Caco-2 (cell line): ENCODE measurements at regions of chr2 and their contacts with region 1.

Region 1: GRCh38 chr2:207473049-207473930 is 56.5 kb upstream of the CREB1 start:
- DNase-seq: no peak
- H3K4me3 ChIP-seq: no peak overlapping the region
- H3K4me3 Mint-ChIP-seq: no peak overlapping the region
- H3K27ac Mint-ChIP-seq: no peak overlapping the region
- H3K4me1 ChIP-seq: peaks cover 25% of the 10 kb centered on the region
- H3K4me1 Mint-ChIP-seq: peaks cover 17% of the 10 kb centered on the region
- H3K27me3 ChIP-seq: no peaks in the 10 kb centered on the region
- H3K27me3 Mint-ChIP-seq: no peaks in the 10 kb centered on the region
- CTCF ChIP-seq: peak; percentile 9 to 30

Region 2: DNA sequence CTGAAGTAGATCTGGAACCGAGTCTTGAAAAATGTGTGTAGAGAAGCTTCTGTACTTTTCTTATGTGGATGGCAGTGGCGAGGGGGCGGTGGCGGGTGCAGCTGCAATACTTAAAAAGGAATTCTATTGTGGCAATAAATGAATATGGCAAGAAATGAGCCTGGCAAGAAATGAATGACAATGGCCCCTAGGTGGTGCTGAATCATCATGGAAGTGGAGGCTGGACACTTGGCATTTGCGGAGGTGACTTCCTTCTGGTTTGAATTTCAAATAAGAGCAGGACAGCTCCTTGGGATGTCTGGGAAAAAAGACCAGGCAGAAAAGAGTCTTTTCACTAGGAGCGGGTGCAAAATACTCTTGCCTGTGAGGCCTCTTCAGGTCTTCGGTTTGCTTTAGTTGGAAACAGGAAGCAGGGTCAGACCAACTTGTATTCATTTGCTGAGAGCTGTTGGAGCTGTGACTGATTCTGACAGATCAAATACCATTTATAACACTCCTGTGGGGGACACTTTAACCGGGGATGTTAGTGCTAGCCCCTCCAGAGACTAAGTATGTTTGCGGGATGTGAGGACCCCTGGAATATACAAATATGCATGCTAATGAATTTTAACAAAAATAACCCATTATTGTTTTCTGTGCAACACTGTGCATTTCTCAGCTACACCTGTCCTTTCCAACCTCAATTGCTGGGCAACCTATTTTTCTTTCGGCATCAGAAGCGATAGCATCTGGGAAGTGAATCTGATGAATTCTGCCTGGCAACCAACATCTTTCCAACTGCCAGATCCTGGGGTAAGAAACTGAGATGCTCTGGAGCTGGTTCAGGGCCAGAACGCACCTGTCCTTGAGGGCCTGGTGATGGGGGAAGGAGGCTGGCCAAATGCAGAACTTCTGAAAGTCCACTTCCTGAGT is 672.5 kb before region 1 on chr2:
- CTCF ChIA-PET with region 1: no interaction called
- POLR2A ChIA-PET with region 1: no interaction called
- intact Hi-C with region 1: loop called (anchors 1 kb)
- DNase-seq: peak; percentile 50 to 71
- H3K4me3 ChIP-seq: no peak overlapping the region
- H3K4me3 Mint-ChIP-seq: no peak overlapping the region
- H3K27ac Mint-ChIP-seq: no peak overlapping the region
- H3K4me1 ChIP-seq: no peaks in the 10 kb centered on the region
- H3K4me1 Mint-ChIP-seq: no peaks in the 10 kb centered on the region
- H3K27me3 ChIP-seq: no peaks in the 10 kb centered on the region
- H3K27me3 Mint-ChIP-seq: no peaks in the 10 kb centered on the region
- CTCF ChIP-seq: peak; percentile 64 to 69

Region 3: DNA sequence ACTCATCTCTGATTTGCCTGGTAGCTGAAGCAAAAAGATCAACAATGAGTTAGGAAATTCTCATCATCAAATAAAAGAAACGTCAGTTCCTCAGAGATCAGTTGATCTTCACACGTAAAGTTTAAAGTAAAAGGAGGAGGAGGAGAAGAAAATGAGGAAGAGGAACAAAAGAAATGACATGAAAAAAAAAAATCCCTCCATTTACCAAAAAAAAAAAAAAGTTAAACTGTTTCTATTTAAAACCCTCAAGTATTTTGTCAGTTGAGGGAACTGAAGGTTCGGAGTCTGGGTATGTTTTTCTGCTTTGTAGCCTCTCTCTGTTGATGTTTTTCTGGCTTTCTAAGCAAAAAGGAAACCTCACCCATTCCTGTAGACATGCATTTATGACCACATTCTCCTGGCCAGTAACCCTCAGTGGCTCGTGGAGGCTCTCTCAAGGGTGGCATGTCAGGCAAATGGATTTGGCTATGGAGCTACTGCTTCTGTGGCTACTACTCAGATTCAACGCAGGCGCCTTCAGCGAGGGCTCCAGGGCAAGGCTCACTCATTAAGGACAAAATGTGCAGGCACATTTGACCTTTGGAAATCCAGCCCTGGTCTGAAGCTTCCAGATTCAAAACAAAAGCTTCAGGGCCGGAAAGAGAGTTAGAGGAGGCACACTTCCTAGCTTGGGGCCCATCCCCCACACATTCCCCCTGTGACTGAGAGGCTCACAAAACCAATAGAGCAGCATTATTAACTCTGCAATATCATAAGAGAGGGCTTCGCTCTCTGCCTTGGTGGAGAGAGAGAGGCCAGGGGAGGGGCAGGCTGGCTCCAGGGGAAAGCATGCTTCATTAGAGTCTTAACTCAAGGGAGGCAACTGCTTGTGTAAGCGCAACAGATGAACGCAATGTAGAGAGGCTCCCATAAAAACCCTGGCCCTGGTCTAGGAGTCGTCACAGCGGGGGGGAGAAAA is 329.8 kb before region 1 on chr2:
- CTCF ChIA-PET with region 1: no interaction called
- POLR2A ChIA-PET with region 1: no interaction called
- intact Hi-C with region 1: loop called (anchors 2 kb)
- DNase-seq: no peak
- H3K4me3 ChIP-seq: no peak overlapping the region
- H3K4me3 Mint-ChIP-seq: no peak overlapping the region
- H3K27ac Mint-ChIP-seq: no peak overlapping the region
- H3K4me1 ChIP-seq: no peaks in the 10 kb centered on the region
- H3K4me1 Mint-ChIP-seq: no peaks in the 10 kb centered on the region
- H3K27me3 ChIP-seq: no peaks in the 10 kb centered on the region
- H3K27me3 Mint-ChIP-seq: peaks cover 4% of the 10 kb centered on the region
- CTCF ChIP-seq: no peak

Region 4: DNA sequence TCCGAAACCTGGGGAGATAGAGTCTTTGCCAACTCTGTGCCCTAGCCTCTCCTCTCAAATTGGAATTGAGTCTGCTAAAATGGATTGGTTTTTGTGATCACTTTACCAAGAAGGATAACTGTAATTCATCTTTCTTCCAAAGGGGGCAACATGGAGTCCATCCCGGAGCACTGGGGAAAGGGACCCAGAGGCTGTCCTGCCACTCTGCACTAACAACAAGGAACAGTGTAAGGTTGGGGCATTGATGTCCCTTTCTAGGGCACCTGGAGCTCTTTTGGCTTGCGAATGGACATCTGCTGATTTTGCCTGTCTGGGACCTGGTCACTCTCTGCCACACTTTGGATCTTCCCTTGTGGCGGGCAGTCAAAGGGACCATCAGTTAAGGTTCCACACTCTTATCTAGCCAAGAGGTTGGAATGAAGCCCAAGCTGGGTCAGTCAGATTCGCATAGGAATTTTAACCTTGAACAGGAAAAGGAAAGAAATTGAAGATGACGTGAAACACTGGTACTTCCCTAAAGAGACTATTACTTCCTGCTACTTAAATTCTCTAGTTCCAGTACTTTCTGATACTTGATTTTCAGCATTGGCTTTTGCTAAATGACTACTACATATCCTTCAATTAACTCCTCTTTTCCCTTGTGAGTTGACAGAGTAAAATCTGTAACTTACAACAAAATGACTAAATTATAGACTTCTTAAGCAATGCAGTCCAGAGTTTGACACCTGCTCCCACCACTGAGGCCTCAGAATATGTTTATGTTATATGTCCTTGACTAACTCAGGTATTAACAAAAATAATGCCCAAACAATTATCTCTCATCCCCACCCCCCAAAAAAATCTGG is 242.8 kb before region 1 on chr2:
- CTCF ChIA-PET with region 1: no interaction called
- POLR2A ChIA-PET with region 1: no interaction called
- intact Hi-C with region 1: loop called (anchors 5 kb)
- DNase-seq: peak in 1 of 2 experiments; percentile 59
- H3K4me3 ChIP-seq: no peak overlapping the region
- H3K4me3 Mint-ChIP-seq: no peak overlapping the region
- H3K27ac Mint-ChIP-seq: no peak overlapping the region
- H3K4me1 ChIP-seq: no peaks in the 10 kb centered on the region
- H3K4me1 Mint-ChIP-seq: no peaks in the 10 kb centered on the region
- H3K27me3 ChIP-seq: no peaks in the 10 kb centered on the region
- H3K27me3 Mint-ChIP-seq: peaks cover 10% of the 10 kb centered on the region
- CTCF ChIP-seq: peak; percentile 67 to 76

Region 5: GRCh38 chr2:207423886-207424285 is 49.4 kb before region 1 on chr2:
- CTCF ChIA-PET with region 1: no interaction called
- POLR2A ChIA-PET with region 1: no interaction called
- intact Hi-C with region 1: no loop called
- DNase-seq: no peak
- H3K4me3 ChIP-seq: no peak overlapping the region
- H3K4me3 Mint-ChIP-seq: no peak overlapping the region
- H3K27ac Mint-ChIP-seq: no peak overlapping the region
- H3K4me1 ChIP-seq: no peaks in the 10 kb centered on the region
- H3K4me1 Mint-ChIP-seq: no peaks in the 10 kb centered on the region
- H3K27me3 ChIP-seq: no peaks in the 10 kb centered on the region
- H3K27me3 Mint-ChIP-seq: peaks cover 17% of the 10 kb centered on the region
- CTCF ChIP-seq: no peak

Region 6: DNA sequence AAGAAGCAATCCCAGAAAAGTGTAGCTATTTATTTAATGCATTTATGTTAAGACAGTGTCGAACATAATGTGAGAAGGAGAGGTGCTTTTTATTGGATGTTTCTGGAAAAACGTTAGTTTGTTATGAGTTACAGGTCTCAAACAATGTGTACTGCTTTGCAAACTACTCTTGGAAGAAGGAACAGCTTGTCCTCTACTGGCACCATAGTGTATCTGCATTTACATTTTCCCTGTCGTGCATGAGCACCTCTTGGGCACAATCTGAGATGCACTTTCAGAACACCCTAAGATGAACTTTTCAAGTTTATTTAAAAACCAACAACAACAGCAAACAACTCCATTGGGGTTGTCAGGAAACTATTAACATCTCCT is 261.0 kb after region 1 on chr2:
- CTCF ChIA-PET with region 1: no interaction called
- POLR2A ChIA-PET with region 1: no interaction called
- intact Hi-C with region 1: loop called (anchors 2 kb)
- DNase-seq: peak in 1 of 2 experiments; percentile 55
- H3K4me3 ChIP-seq: no peak overlapping the region
- H3K4me3 Mint-ChIP-seq: peak overlapping the region; percentile 52
- H3K27ac Mint-ChIP-seq: no peak overlapping the region
- H3K4me1 ChIP-seq: peaks cover 20% of the 10 kb centered on the region
- H3K4me1 Mint-ChIP-seq: peaks cover 19% of the 10 kb centered on the region
- H3K27me3 ChIP-seq: no peaks in the 10 kb centered on the region
- H3K27me3 Mint-ChIP-seq: no peaks in the 10 kb centered on the region
- CTCF ChIP-seq: peak in 1 of 2 experiments; percentile 67